Right ventricle myocardium inferior (tissue), 1 donor: ENCODE measurements at regions of chr7 and their contacts with region 1.

Region 1: DNA sequence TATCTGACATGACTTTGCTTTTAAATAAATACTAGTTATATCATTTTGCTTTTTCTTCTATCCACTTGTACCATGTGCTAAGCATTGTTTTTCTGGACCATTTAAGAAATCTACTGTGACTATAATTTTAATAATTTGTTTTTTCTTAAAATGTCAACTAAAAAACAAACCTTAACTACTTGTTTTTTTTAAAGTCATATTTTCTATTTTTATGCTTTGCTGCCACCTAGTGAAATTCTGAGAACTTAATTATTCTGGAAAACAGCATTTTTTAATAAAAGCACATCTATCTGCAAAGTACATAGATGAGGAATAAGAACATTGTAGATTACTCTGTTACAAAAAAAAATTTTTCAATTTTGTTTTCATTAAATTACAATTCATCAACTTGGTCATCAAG is 47.4 kb downstream of the ORC5 start:
- DNase-seq: no peak
- ATAC-seq: no peak

Region 2: GRCh38 chr7:103524042-103524907 is 636.1 kb before region 1 on chr7:
- intact Hi-C with region 1: loop called (anchors 2 kb)
- DNase-seq: no peak
- ATAC-seq: peak; percentile 46

Region 3: DNA sequence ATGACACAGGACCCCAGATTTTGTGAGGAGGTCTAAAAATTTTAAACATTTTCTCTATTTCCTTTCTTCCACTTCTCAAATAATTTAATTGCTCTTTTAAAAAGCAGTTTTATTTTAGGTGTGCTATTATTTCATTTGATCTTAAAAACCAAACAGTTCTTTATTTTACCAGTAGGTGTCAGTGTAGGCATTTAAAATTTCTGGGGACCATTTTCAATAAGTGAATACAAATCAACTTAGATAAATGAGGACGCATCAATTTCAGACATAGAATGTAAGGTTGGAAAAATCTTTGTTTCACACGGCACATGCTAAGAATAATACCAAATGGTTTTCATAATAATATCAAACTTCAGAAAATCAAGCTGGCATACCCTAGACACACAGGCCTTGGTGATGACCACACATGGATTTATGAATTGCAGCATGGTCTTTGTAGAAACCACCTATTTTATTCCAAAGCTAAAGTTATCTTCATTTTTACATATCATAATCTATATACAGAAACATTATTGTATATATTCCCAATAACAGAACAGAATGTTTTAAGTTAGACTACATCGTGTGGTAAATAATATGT is 586.8 kb before region 1 on chr7:
- intact Hi-C with region 1: loop called (anchors 5 kb)
- DNase-seq: no peak
- ATAC-seq: no peak

Region 4: DNA sequence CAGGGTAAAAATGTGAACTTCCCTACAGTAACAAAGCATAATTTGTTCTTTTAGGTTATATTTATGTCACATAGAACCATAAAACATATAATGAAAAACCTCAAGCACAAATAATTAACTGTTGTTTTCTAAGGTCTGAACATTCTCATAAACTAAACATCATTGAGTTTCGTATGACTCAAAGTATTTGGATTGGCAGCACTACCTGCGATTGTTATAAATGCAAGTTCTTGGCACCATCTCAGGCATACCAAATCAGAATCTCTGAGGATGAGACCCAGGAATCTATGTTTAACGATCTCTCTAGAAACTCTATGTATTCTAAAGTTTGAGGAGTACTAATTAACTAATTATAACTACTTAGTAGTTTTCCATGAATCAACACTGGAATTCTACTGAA is 25.0 kb after region 1 on chr7:
- intact Hi-C with region 1: no loop called
- DNase-seq: no peak
- ATAC-seq: no peak